Endothelial cell of umbilical vein (primary cell): ENCODE measurements at regions of chr7 and their contacts with region 1.

Region 1: DNA sequence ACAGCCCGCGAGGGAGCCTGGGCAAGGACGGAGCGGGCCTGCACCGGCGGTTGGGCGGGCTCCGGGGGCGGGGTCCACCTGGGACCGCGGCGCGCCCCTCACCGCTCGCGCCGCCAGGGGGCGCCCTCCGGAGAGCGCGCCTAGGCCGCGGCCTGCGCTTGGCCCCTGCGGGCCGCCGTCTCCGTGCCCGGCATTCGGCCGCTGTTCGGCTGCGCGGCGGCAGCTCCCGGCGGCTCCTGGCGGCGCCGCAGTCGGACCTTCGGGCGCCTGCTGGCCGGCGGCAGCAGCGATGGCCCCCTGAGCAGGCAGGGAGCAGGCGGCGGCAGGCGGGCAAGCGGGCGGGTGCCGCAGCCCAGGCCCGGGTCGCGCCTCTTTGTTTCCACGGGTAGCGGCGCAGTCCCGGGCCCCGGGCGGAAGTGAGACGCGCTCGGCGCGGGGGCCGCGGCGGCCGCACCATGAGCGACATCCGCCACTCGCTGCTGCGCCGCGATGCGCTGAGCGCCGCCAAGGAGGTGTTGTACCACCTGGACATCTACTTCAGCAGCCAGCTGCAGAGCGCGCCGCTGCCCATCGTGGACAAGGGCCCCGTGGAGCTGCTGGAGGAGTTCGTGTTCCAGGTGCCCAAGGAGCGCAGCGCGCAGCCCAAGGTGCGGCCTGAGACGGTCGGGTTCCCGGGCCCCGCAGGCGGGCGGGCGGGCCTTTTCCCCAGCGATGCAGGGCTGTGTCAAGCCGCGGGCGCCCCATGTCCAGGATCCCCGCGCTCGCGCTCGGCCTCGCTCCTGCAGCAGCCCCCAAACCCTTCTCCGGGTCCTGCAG is at the start of gene INTS15:
- DNase-seq: peak; percentile 70
- H3K4me3 ChIP-seq: peak within 1 kb of the TSS; percentile 66 to 96 (median 70)
- H3K27ac ChIP-seq: peak within 1 kb of the TSS; percentile 60
- H3K4me1 ChIP-seq: peaks cover 12% of the 10 kb centered on the region
- H3K27me3 ChIP-seq: no peaks in the 10 kb centered on the region
- CTCF ChIP-seq: peak; percentile 57 to 86
- POLR2A ChIP-seq: peak; percentile 94
- total RNA-seq, gene INTS15: 31.5 and 35.7 TPM in 2 replicates

Region 2: DNA sequence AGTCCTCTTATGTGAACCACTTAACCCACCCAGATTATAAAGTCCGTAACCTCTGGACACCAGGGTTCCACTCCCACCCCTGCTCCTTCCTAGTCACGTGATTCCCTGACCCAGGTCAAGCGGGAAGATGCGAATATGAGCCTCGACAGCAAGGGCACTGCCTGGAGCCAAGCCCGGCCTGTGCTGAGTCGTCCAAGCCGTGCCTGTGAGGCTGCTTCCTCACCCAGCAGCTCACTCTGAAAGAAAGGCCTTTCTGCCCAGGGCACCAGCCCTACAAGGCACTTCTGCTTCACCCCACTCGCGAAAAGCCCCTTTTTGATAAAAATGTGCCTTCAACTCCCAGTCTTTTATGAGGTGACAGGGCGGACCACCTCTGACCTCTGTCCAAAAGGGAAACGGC is 403.4 kb before region 1 on chr7:
- CTCF ChIA-PET with region 1: no interaction called
- POLR2A ChIA-PET with region 1: no interaction called
- dilution Hi-C with region 1: no loop called
- intact Hi-C with region 1: no loop called
- DNase-seq: no peak
- H3K4me3 ChIP-seq: no peak overlapping the region
- H3K27ac ChIP-seq: no peak overlapping the region
- H3K4me1 ChIP-seq: no peaks in the 10 kb centered on the region
- H3K27me3 ChIP-seq: no peaks in the 10 kb centered on the region
- CTCF ChIP-seq: no peak
- POLR2A ChIP-seq: no peak

Region 3: GRCh38 chr7:6675807-6676405 is 85.9 kb after region 1 on chr7:
- CTCF ChIA-PET with region 1: no interaction called
- POLR2A ChIA-PET with region 1: no interaction called
- dilution Hi-C with region 1: no loop called
- intact Hi-C with region 1: no loop called
- DNase-seq: no peak
- H3K4me3 ChIP-seq: no peak overlapping the region
- H3K27ac ChIP-seq: no peak overlapping the region
- H3K4me1 ChIP-seq: no peaks in the 10 kb centered on the region
- H3K27me3 ChIP-seq: no peaks in the 10 kb centered on the region
- CTCF ChIP-seq: no peak
- POLR2A ChIP-seq: no peak

Region 4: GRCh38 chr7:6706677-6707544 is 116.9 kb after region 1 on chr7 and contains the start of gene ZNF12:
- CTCF ChIA-PET with region 1: no interaction called
- POLR2A ChIA-PET with region 1: no interaction called
- dilution Hi-C with region 1: no loop called
- intact Hi-C with region 1: loop called (anchors 5 kb)
- DNase-seq: peak; percentile 93
- H3K4me3 ChIP-seq: peak within 1 kb of the TSS; percentile 69 to 76 (median 70)
- H3K27ac ChIP-seq: peak within 1 kb of the TSS; percentile 87
- H3K4me1 ChIP-seq: peaks cover 12% of the 10 kb centered on the region
- H3K27me3 ChIP-seq: no peaks in the 10 kb centered on the region
- CTCF ChIP-seq: no peak
- POLR2A ChIP-seq: peak; percentile 50
- total RNA-seq, gene ZNF12: 13.4 TPM in 2 replicates